Activated T-helper 2 cell treated with anti-CD3 and anti-CD28 coated beads, Interferon-gamma antibody, Interleukin-2, Interleukin-4, amounts not matched to agents 10 μg/mL and 5 μg/mL and 100 μg/mL, durations not matched to agents 14 hours and 24 hours and 36 hours (primary cell): ENCODE measurements at regions of chr17 and their contacts with region 1.

Region 1: GRCh38 chr17:42484304-42484703 is 25.6 kb downstream of the ATP6V0A1 start:
- DNase-seq: peak; percentile 76
- H3K4me3 Mint-ChIP-seq: no peak overlapping the region
- H3K27ac Mint-ChIP-seq: no peak overlapping the region
- H3K4me1 Mint-ChIP-seq: peaks cover 17% of the 10 kb centered on the region
- H3K27me3 Mint-ChIP-seq: no peaks in the 10 kb centered on the region

Region 2: GRCh38 chr17:42428141-42428944 is 56.0 kb before region 1 on chr17:
- intact Hi-C with region 1: no loop called
- DNase-seq: no peak
- H3K4me3 Mint-ChIP-seq: no peak overlapping the region
- H3K27ac Mint-ChIP-seq: no peak overlapping the region
- H3K4me1 Mint-ChIP-seq: no peaks in the 10 kb centered on the region
- H3K27me3 Mint-ChIP-seq: peaks cover 43% of the 10 kb centered on the region

Region 3: GRCh38 chr17:42459801-42460281 is 24.5 kb before region 1 on chr17:
- intact Hi-C with region 1: loop called (anchors 1 kb)
- DNase-seq: peak; percentile 23
- H3K4me3 Mint-ChIP-seq: peak overlapping the region; percentile 87
- H3K27ac Mint-ChIP-seq: peak overlapping the region; percentile 59
- H3K4me1 Mint-ChIP-seq: peaks cover 38% of the 10 kb centered on the region
- H3K27me3 Mint-ChIP-seq: peaks cover 10% of the 10 kb centered on the region